Activated naive CD8-positive, alpha-beta T cell treated with anti-CD3 and anti-CD28 coated beads, Interleukin-2, amount 10 ng/mL, durations not matched to agents 7 days and 5 days (primary cell): ENCODE measurements at regions of chr11 and their contacts with region 1.

Region 1: DNA sequence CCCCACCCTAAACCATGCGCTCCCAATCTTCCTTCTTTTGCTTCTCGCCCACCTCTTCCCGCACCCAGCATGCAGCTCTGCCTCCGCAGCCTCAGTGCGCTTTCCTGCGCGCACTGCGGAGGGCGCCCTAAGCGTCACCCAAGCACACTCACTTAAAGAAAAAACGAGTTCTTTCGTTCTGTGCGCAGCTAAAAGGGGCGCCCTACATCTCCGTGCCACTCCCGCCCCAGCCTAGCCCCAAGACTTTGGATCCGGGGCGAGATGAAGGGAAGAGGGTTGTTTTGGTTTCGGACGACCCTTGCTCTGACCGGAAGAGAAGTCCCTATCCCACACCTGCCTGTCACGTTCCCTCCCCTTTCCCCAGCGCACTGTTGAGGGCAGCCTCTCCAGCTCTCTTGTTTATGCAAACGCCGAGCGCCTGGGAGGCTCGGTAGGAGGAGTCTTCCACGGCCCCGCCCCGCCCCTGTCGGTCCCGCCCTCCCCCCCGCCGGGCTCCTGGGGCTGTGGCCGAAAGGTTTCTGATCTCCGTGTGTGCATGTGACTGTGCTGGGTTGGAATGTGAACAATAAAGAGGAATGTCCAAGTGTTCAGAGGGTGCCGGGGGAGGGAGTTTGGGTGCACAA is 5.3 kb downstream of the VSIG2 start:
- DNase-seq: peak; percentile 80
- ATAC-seq: peak; percentile 90
- H3K4me3 Mint-ChIP-seq: peak overlapping the region; percentile 96
- H3K27ac Mint-ChIP-seq: peak overlapping the region; percentile 97
- H3K4me1 Mint-ChIP-seq: peaks cover 20% of the 10 kb centered on the region
- H3K27me3 Mint-ChIP-seq: peaks cover 6% of the 10 kb centered on the region

Region 2: GRCh38 chr11:124763156-124763947 is 16.6 kb after region 1 on chr11:
- POLR2A ChIA-PET with region 1: interaction called, 11 read pairs
- DNase-seq: peak; percentile 88
- ATAC-seq: peak; percentile 40
- H3K4me3 Mint-ChIP-seq: peak overlapping the region; percentile 99
- H3K27ac Mint-ChIP-seq: peak overlapping the region; percentile 57
- H3K4me1 Mint-ChIP-seq: peaks cover 11% of the 10 kb centered on the region
- H3K27me3 Mint-ChIP-seq: peaks cover 36% of the 10 kb centered on the region